Heart right ventricle (tissue), 16 donors: ENCODE measurements at regions of chr14 and their contacts with region 1.

Region 1: DNA sequence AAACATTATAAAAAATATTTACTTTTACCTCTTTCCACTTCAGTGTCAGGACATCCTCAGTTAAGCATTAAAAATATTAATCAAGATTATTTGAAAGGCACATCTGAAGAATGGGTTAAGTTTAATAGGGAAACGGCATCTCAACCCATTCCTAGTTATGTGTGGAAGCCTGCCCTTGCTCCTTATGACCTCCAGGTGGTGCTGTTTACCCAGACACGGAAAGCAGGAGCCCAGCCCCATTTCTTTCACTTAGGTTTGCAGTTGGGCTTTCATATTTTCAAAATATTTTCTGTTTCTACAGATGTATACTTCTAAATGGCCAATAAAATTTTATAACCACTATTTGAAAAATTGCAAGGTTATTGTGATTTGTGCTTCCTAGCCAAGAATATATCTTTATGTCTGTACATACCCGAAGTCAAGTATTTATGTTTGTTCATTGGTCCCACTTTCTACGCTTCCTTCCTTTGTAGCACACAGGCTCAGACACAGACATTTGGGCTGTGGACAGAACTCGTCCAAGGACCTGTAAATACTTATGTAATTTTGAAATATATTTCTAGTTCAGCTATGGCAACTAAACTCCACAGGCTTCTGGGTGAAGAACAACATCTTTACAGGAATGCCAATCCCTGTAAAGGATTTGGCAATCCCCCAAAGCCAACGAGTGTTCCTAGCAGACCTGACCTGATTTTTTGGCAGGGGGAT is 247.1 kb downstream of the AKAP6 start:
- DNase-seq: peak in 1 of 2 donors; percentile 34
- ATAC-seq: peak; percentile 70 to 91 (median 82)
- H3K4me3 ChIP-seq: peak overlapping the region in 4 of 10 donors; percentile 23 to 39 (median 26)
- H3K27ac ChIP-seq: peak overlapping the region in 1 of 10 donors; percentile 9
- H3K4me1 ChIP-seq: peaks cover 4 to 55% (median 14%) of the 10 kb centered on the region in 9 donors
- H3K27me3 ChIP-seq: no peaks in the 10 kb centered on the region
- CTCF ChIP-seq: peak; percentile 87 to 99 (median 95)

Region 2: GRCh38 chr14:32710731-32711680 is 134.8 kb after region 1 on chr14:
- intact Hi-C with region 1: loop called in 1 of 10 experiments (anchors 5 kb)
- DNase-seq: peak in 1 of 2 donors; percentile 32
- ATAC-seq: peak in 6 of 8 donors; percentile 7 to 47 (median 33)
- H3K4me3 ChIP-seq: peak overlapping the region in 2 of 10 donors; percentile 13 to 14
- H3K27ac ChIP-seq: peak overlapping the region in 4 of 10 donors; percentile 2 to 70 (median 34)
- H3K4me1 ChIP-seq: peaks cover 7 to 48% (median 32%) of the 10 kb centered on the region in 9 donors
- H3K27me3 ChIP-seq: no peaks in the 10 kb centered on the region
- CTCF ChIP-seq: peak; percentile 24 to 72 (median 53)

Region 3: GRCh38 chr14:32835924-32836323 is 259.7 kb after region 1 on chr14:
- intact Hi-C with region 1: loop called in 1 of 10 experiments (anchors 10 kb)
- DNase-seq: no peak
- ATAC-seq: peak in 2 of 8 donors; percentile 15 to 49
- H3K4me3 ChIP-seq: no peak overlapping the region
- H3K27ac ChIP-seq: no peak overlapping the region
- H3K4me1 ChIP-seq: no peaks in the 10 kb centered on the region
- H3K27me3 ChIP-seq: no peaks in the 10 kb centered on the region
- CTCF ChIP-seq: no peak

Region 4: GRCh38 chr14:32998433-32998832 is 422.2 kb after region 1 on chr14:
- intact Hi-C with region 1: loop called in 4 of 10 experiments (anchors 2 to 10 kb)
- DNase-seq: no peak
- ATAC-seq: no peak
- H3K4me3 ChIP-seq: no peak overlapping the region
- H3K27ac ChIP-seq: no peak overlapping the region
- H3K4me1 ChIP-seq: no peaks in the 10 kb centered on the region
- H3K27me3 ChIP-seq: no peaks in the 10 kb centered on the region
- CTCF ChIP-seq: peak in 7 of 9 donors; percentile 30 to 59 (median 52)

Region 5: GRCh38 chr14:33432407-33433023 is 856.3 kb after region 1 on chr14:
- intact Hi-C with region 1: loop called in 4 of 10 experiments (anchors 5 to 10 kb)
- DNase-seq: no peak
- ATAC-seq: no peak
- H3K4me3 ChIP-seq: no peak overlapping the region
- H3K27ac ChIP-seq: no peak overlapping the region
- H3K4me1 ChIP-seq: peaks cover 0 to 7% (median 0%) of the 10 kb centered on the region in 9 donors
- H3K27me3 ChIP-seq: no peaks in the 10 kb centered on the region
- CTCF ChIP-seq: peak in 8 of 9 donors; percentile 22 to 55 (median 52)

Region 6: DNA sequence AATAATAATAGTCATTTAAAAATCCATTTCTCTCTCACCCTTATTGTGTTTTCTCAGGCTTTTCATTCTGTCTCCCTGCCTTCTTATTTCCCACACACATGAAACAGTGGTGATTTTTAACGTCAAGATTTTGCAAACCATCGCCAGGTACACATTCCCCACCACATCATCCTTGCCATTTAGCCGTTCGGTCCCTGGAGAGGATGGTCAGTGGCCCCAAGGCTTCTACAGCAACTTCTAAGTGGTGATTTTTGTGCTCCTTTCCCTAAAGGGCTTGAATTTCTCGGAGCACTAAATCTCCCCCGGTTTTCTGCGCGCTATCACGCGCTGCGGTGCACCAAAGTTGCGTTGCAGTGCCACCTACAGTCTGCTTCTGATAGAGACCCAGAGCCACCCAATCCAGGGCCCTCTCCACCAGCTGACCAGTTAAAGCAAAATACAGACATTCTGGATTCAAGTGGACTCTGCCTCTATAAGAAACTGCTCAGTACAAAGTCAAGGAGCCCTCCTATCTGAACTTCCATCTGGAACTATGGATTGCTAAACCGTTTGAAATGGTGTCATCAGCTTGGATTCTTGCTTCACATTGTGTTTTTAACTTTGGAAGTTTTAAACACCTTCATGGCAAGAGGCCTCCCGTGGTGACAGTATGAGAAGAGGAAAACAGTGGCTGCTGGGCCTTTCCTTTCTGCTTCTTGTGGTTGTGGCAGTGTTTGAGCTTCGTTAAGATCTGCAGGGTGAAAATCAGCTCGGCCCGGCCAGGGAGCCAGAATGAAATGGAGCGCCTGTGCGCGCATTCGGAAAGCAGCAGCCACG is 1651.8 kb after region 1 on chr14:
- intact Hi-C with region 1: loop called in 2 of 10 experiments (anchors 10 kb)
- DNase-seq: peak; percentile 53 to 73
- ATAC-seq: peak; percentile 91 to 96 (median 94)
- H3K4me3 ChIP-seq: peak overlapping the region in 6 of 10 donors; percentile 12 to 42 (median 34)
- H3K27ac ChIP-seq: no peak overlapping the region
- H3K4me1 ChIP-seq: peaks cover 0 to 30% (median 6%) of the 10 kb centered on the region in 9 donors
- H3K27me3 ChIP-seq: no peaks in the 10 kb centered on the region
- CTCF ChIP-seq: peak; percentile 62 to 95 (median 85)

Region 7: GRCh38 chr14:34300882-34301734 is 1724.9 kb after region 1 on chr14:
- intact Hi-C with region 1: loop called in 3 of 10 experiments (anchors 5 to 10 kb)
- DNase-seq: no peak
- ATAC-seq: peak in 3 of 8 donors; percentile 33 to 61 (median 53)
- H3K4me3 ChIP-seq: no peak overlapping the region
- H3K27ac ChIP-seq: no peak overlapping the region
- H3K4me1 ChIP-seq: peaks cover 0 to 11% (median 0%) of the 10 kb centered on the region in 9 donors
- H3K27me3 ChIP-seq: no peaks in the 10 kb centered on the region
- CTCF ChIP-seq: peak; percentile 39 to 76 (median 66)